ENCODE measurements at regions of chr10 and their contacts with region 1.

Region 1: DNA sequence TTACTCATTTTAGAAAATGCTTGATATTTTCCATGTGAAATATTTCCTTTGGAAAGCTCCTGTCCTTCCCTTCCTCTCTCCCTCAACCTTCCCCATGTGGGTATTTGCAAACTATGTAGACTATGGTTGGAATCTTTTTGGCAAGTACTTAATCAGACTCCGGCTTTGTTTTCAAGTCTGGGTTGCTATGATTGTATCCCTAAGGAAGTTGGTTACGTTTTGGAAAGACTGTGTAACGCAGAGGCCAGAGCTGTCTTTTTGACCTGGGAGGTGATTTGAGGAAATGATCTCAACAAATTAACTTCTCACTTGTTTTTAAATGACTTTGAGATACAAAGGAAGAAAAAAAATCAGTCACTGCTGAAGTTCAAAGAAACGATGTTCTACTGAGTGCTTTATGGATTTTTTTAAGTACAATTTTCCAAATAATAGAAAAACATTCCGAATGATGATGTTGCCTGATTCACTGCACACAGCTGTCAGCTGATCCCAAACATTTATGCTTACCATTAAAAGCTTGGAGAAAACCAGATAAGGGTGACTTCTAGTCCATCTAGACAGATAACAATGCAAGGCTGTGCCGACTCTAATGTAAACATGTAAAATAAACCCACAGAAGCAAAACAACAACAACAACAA is 145.5 kb upstream of the CELF2 start:
- DNase-seq: peak; percentile 99
- H3K4me3 ChIP-seq: peak overlapping the region in 1 of 3 experiments; percentile 25
- H3K27ac ChIP-seq: peak overlapping the region; percentile 99
- H3K4me1 ChIP-seq: peaks cover 35% of the 10 kb centered on the region
- H3K27me3 ChIP-seq: no peaks in the 10 kb centered on the region
- CTCF ChIP-seq: no peak
- POLR2A ChIP-seq: no peak

Region 2: DNA sequence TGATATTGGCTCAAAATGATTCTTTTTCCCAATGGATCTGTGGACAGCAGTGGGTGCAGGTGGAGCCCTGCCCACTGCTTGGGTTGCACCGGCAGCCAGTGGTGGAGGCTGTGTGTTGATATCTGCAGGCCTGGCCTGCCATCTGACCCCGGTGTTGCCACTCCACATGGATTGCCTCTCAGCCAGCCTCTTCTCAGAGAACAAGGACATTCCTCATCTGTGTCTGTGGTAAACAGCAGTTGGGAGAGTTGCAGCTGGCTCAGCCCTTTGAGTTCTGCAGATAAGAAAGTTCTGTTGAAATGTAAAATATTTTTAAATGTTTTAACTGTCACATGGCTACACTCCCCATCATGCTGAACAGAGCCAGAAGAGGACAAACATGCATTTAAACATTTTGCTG is 229.4 kb before region 1 on chr10:
- CTCF ChIA-PET with region 1: no interaction called
- POLR2A ChIA-PET with region 1: no interaction called
- dilution Hi-C with region 1: no loop called
- intact Hi-C with region 1: no loop called
- DNase-seq: no peak
- H3K4me3 ChIP-seq: no peak overlapping the region
- H3K27ac ChIP-seq: no peak overlapping the region
- H3K4me1 ChIP-seq: no peaks in the 10 kb centered on the region
- H3K27me3 ChIP-seq: no peaks in the 10 kb centered on the region
- CTCF ChIP-seq: no peak
- POLR2A ChIP-seq: no peak

Region 3: DNA sequence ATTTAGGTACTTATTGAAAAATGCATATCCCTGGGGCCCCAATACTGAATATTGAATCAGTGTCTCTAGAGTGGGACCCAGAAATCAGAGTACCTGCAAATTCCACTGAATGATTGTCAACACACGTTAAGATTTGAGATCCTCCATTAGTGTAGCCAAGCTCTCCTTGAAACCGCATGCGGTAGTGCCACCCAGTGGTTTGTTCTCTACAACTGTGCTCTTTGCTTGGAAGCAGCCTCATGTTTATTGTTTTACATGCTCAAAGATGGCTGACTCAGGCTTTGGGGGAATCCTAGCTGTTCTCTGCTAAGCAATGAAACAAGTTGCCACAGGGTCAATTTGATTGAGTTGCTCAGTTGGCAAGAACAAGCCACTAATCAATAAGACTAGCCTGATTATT is 194.7 kb before region 1 on chr10:
- CTCF ChIA-PET with region 1: no interaction called
- POLR2A ChIA-PET with region 1: no interaction called
- dilution Hi-C with region 1: no loop called
- intact Hi-C with region 1: loop called (anchors 1 kb)
- DNase-seq: peak; percentile 50
- H3K4me3 ChIP-seq: no peak overlapping the region
- H3K27ac ChIP-seq: no peak overlapping the region
- H3K4me1 ChIP-seq: no peaks in the 10 kb centered on the region
- H3K27me3 ChIP-seq: no peaks in the 10 kb centered on the region
- CTCF ChIP-seq: peak; percentile 19 to 25
- POLR2A ChIP-seq: no peak

Region 4: GRCh38 chr10:10786109-10787090 is 85.8 kb before region 1 on chr10:
- CTCF ChIA-PET with region 1: interaction called, 5 read pairs
- POLR2A ChIA-PET with region 1: no interaction called
- dilution Hi-C with region 1: no loop called
- intact Hi-C with region 1: loop called (anchors 1 kb)
- DNase-seq: peak; percentile 60
- H3K4me3 ChIP-seq: no peak overlapping the region
- H3K27ac ChIP-seq: peak overlapping the region; percentile 80
- H3K4me1 ChIP-seq: peaks cover 26% of the 10 kb centered on the region
- H3K27me3 ChIP-seq: no peaks in the 10 kb centered on the region
- CTCF ChIP-seq: no peak
- POLR2A ChIP-seq: no peak

Region 5: GRCh38 chr10:10792681-10793080 is 79.5 kb before region 1 on chr10:
- CTCF ChIA-PET with region 1: interaction called, 8 read pairs
- POLR2A ChIA-PET with region 1: interaction called, 6 read pairs
- dilution Hi-C with region 1: no loop called
- intact Hi-C with region 1: loop called (anchors 1 kb)
- DNase-seq: peak; percentile 89
- H3K4me3 ChIP-seq: no peak overlapping the region
- H3K27ac ChIP-seq: peak overlapping the region; percentile 98
- H3K4me1 ChIP-seq: peaks cover 43% of the 10 kb centered on the region
- H3K27me3 ChIP-seq: no peaks in the 10 kb centered on the region
- CTCF ChIP-seq: no peak
- POLR2A ChIP-seq: peak; percentile 53

Region 6: GRCh38 chr10:10798102-10798863 is 73.9 kb before region 1 on chr10:
- CTCF ChIA-PET with region 1: interaction called, 3 read pairs
- POLR2A ChIA-PET with region 1: interaction called, 6 read pairs
- dilution Hi-C with region 1: no loop called
- intact Hi-C with region 1: loop called (anchors 1 kb)
- DNase-seq: peak; percentile 49
- H3K4me3 ChIP-seq: no peak overlapping the region
- H3K27ac ChIP-seq: peak overlapping the region; percentile 88
- H3K4me1 ChIP-seq: peaks cover 34% of the 10 kb centered on the region
- H3K27me3 ChIP-seq: no peaks in the 10 kb centered on the region
- CTCF ChIP-seq: no peak
- POLR2A ChIP-seq: peak; percentile 25

Region 7: DNA sequence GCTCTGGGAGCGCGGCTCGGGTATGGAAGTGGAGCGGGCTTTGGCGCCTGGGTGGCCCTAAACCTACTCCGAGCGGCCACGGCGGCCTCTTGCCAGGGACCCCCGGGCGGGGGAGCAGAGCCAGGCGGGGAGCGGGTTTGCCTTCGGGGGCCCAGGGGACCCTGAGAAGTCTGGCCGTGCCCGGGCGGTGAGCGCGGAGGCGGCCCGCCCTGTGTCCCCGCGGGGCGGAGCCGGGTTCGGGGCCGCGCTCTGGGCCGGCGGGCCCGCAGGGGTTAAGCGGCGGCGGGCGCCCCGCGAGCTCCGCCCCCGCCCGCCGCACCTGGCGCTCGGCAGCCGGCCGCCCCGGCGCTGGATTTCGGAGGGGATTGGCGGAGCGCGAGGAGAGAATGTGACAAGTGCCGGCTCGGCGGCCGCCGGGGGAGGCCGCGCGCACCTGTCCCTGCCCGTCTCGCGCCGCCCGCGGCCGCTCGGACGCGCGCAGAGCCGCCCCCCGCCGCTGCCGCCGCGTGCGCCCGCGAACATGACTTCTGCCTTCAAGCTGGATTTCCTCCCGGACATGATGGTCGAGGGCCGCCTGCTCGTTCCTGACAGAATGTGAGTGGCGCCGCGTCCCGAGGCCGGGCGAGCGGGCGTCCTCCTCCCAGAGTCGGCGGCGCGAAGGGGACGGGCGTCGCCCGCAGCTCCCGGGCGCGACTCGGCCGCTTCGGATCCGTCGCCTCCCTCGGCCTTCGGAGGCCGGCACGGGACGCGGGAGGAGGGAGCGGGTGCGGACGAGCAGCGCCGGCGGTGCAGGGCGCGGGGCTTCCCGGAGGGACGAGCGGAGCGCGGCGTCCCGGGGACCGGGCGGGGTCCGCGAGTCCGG is 145.6 kb after region 1 on chr10 and contains the start of gene CELF2:
- CTCF ChIA-PET with region 1: interaction called, 3 read pairs
- POLR2A ChIA-PET with region 1: interaction called, 5 read pairs
- dilution Hi-C with region 1: no loop called
- intact Hi-C with region 1: loop called (anchors 1 kb)
- DNase-seq: peak; percentile 64
- H3K4me3 ChIP-seq: peak within 1 kb of the TSS; percentile 77 to 91 (median 88)
- H3K27ac ChIP-seq: peak within 1 kb of the TSS; percentile 71
- H3K4me1 ChIP-seq: peaks cover 9% of the 10 kb centered on the region
- H3K27me3 ChIP-seq: no peaks in the 10 kb centered on the region
- CTCF ChIP-seq: no peak
- POLR2A ChIP-seq: peak; percentile 26
- total RNA-seq, gene CELF2: 35.5 and 42.6 TPM in 2 replicates

Region 8: GRCh38 chr10:11209830-11210181 is 337.7 kb after region 1 on chr10:
- CTCF ChIA-PET with region 1: no interaction called
- POLR2A ChIA-PET with region 1: no interaction called
- dilution Hi-C with region 1: no loop called
- intact Hi-C with region 1: loop called (anchors 1 kb)
- DNase-seq: peak; percentile 85
- H3K4me3 ChIP-seq: no peak overlapping the region
- H3K27ac ChIP-seq: peak overlapping the region; percentile 71
- H3K4me1 ChIP-seq: peaks cover 36% of the 10 kb centered on the region
- H3K27me3 ChIP-seq: no peaks in the 10 kb centered on the region
- CTCF ChIP-seq: no peak
- POLR2A ChIP-seq: no peak